ENCODE measurements at regions of chr13 and their contacts with region 1.

Region 1: DNA sequence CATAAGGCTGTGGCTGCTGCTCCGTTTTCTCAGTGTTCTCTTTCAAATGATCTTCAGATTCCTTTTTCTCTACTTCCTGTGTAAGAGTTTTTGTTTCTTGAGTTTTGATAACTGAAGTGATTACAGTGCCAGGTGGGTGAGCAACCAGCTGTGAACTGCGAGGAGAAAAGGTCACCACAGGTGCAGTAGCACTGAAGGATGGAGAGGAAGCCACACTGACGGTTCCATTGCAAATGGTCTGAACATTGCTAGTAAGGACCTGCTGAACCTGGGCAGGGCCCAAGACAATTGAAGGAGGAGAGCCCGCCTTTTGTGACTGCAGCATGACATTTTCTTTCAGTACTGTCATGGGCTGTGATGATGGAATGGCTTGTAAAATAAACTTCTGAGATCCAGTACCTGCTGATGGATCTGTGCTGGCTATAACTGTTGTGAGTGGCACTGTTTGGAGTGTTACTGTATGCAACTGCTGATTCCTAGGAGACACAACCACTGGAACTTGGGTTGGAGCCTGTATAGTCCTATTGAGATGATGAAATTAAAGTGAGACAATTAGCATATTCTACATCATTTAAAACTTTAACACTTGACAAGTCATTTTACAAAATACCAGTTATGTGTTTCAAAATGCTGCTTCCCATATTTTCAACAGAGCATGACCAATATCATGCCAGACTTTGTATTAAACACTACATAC is 85.5 kb downstream of the ELF1 start:
- DNase-seq: no peak
- ATAC-seq: no peak
- H3K4me3 ChIP-seq: no peak overlapping the region
- H3K27ac ChIP-seq: no peak overlapping the region
- H3K4me1 ChIP-seq: peaks cover 9% of the 10 kb centered on the region; the same call in 2 of the 3 replicates
- CTCF ChIP-seq: no peak
- EP300 ChIP-seq: no peak
- POLR2A ChIP-seq: no peak
- RAD21 ChIP-seq: no peak

Region 2: DNA sequence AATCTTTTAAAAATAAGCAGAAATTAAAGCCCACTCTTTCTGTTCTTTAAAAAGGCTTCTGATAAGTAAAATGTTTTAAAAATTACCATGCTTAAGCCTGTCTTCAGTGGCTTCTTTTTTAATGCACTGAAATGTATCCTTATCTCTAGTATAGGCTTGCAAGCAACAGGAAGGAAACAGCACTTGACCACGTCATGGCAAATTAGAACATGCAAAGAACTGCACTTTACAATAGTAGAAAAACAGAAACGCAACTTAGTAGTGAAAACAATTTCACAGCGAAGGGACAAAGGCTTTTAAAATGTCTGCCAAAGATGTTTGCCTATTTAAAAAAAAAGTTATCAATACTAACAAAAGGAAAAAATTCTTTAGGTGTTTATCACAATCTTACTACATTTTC is 49.1 kb after region 1 on chr13:
- CTCF ChIA-PET with region 1: interaction called, 3 read pairs
- POLR2A ChIA-PET with region 1: interaction called, 10 read pairs
- DNase-seq: no peak
- ATAC-seq: no peak
- H3K4me3 ChIP-seq: no peak overlapping the region
- H3K27ac ChIP-seq: no peak overlapping the region
- H3K4me1 ChIP-seq: peaks cover 32% of the 10 kb centered on the region; the same call in 2 of the 3 replicates
- CTCF ChIP-seq: no peak
- EP300 ChIP-seq: no peak
- POLR2A ChIP-seq: no peak
- RAD21 ChIP-seq: no peak

Measured in A549 (cell line).